ENCODE measurements at regions of chr4 and their contacts with region 1.

Region 1: DNA sequence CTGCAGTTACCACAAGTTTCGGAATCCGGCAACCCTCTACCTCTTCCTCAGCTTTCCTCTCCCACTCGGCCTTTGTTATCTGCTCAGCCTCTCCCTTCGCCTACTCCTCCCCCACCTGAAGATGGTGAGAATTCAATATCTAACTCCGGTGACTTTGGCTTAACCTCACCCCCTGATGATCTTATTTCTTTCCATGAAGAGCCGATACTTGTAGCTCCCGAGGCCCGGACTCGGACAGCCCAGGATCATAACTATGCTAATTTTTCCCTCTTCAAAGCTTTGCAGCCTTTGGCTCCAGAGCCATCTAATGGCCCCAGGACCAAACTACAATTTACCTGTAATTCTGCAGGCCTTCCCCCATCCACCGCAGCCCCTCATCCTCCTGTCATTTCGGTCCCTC is 32.0 kb upstream of the MGST2 start:
- DNase-seq: peak; percentile 26 to 34
- ATAC-seq: peak; percentile 90 to 97 (median 94)
- H3K4me3 ChIP-seq: peak overlapping the region in 9 of 10 donors; percentile 17 to 53 (median 48)
- H3K27ac ChIP-seq: peak overlapping the region in 8 of 10 donors; percentile 10 to 73 (median 44)
- H3K4me1 ChIP-seq: peaks cover 0 to 7% (median 0%) of the 10 kb centered on the region in 9 donors
- H3K27me3 ChIP-seq: no peaks in the 10 kb centered on the region
- CTCF ChIP-seq: peak; percentile 32 to 76 (median 65)

Region 2: GRCh38 chr4:139278485-139278884 is 355.2 kb before region 1 on chr4:
- intact Hi-C with region 1: no loop called
- DNase-seq: no peak
- ATAC-seq: no peak
- H3K4me3 ChIP-seq: peak overlapping the region in 7 of 10 donors; percentile 44 to 62 (median 59)
- H3K27ac ChIP-seq: peak overlapping the region in 1 of 10 donors; percentile 15
- H3K4me1 ChIP-seq: peaks cover 0 to 21% (median 14%) of the 10 kb centered on the region in 9 donors
- H3K27me3 ChIP-seq: peaks cover 0 to 63% (median 25%) of the 10 kb centered on the region in 7 donors
- CTCF ChIP-seq: no peak

Region 3: DNA sequence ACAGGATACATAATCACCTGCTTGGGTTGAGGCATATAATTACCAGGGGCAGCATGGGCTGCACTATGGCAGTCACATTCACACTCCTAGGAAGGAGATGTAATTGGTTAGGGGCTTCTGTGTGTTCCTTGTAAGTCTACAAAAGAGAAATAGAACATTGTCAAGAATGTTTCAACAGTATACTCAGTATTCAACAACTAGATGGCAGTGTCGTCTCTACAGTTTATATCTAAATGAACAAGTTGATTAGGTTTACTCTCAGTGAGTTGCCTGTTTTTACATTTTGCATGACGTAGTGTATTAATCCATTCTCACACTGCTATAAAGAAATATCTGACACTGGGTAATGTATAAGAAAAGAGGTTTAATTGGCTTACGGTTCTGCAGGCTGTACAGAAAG is 230.2 kb before region 1 on chr4:
- intact Hi-C with region 1: loop called in 2 of 10 experiments (anchors 10 kb)
- DNase-seq: no peak
- ATAC-seq: no peak
- H3K4me3 ChIP-seq: no peak overlapping the region
- H3K27ac ChIP-seq: no peak overlapping the region
- H3K4me1 ChIP-seq: peaks cover 0 to 7% (median 0%) of the 10 kb centered on the region in 9 donors
- H3K27me3 ChIP-seq: no peaks in the 10 kb centered on the region
- CTCF ChIP-seq: peak in 3 of 9 donors; percentile 4 to 14 (median 13)

Region 4: GRCh38 chr4:139410312-139410711 is 223.3 kb before region 1 on chr4:
- intact Hi-C with region 1: loop called in 7 of 10 experiments (anchors 5 to 10 kb)
- DNase-seq: no peak
- ATAC-seq: no peak
- H3K4me3 ChIP-seq: no peak overlapping the region
- H3K27ac ChIP-seq: no peak overlapping the region
- H3K4me1 ChIP-seq: no peaks in the 10 kb centered on the region
- H3K27me3 ChIP-seq: no peaks in the 10 kb centered on the region
- CTCF ChIP-seq: no peak

Region 5: GRCh38 chr4:139416073-139416673 is 217.5 kb before region 1 on chr4:
- intact Hi-C with region 1: loop called in 6 of 10 experiments (anchors 2 to 10 kb)
- DNase-seq: no peak
- ATAC-seq: no peak
- H3K4me3 ChIP-seq: no peak overlapping the region
- H3K27ac ChIP-seq: no peak overlapping the region
- H3K4me1 ChIP-seq: peaks cover 0 to 26% (median 13%) of the 10 kb centered on the region in 9 donors
- H3K27me3 ChIP-seq: no peaks in the 10 kb centered on the region
- CTCF ChIP-seq: peak; percentile 51 to 82 (median 71)

Region 6: GRCh38 chr4:139492429-139492828 is 141.2 kb before region 1 on chr4:
- intact Hi-C with region 1: loop called in 6 of 10 experiments (anchors 2 to 10 kb)
- DNase-seq: no peak
- ATAC-seq: no peak
- H3K4me3 ChIP-seq: no peak overlapping the region
- H3K27ac ChIP-seq: no peak overlapping the region
- H3K4me1 ChIP-seq: peaks cover 0 to 5% (median 0%) of the 10 kb centered on the region in 9 donors
- H3K27me3 ChIP-seq: no peaks in the 10 kb centered on the region
- CTCF ChIP-seq: no peak

Region 7: DNA sequence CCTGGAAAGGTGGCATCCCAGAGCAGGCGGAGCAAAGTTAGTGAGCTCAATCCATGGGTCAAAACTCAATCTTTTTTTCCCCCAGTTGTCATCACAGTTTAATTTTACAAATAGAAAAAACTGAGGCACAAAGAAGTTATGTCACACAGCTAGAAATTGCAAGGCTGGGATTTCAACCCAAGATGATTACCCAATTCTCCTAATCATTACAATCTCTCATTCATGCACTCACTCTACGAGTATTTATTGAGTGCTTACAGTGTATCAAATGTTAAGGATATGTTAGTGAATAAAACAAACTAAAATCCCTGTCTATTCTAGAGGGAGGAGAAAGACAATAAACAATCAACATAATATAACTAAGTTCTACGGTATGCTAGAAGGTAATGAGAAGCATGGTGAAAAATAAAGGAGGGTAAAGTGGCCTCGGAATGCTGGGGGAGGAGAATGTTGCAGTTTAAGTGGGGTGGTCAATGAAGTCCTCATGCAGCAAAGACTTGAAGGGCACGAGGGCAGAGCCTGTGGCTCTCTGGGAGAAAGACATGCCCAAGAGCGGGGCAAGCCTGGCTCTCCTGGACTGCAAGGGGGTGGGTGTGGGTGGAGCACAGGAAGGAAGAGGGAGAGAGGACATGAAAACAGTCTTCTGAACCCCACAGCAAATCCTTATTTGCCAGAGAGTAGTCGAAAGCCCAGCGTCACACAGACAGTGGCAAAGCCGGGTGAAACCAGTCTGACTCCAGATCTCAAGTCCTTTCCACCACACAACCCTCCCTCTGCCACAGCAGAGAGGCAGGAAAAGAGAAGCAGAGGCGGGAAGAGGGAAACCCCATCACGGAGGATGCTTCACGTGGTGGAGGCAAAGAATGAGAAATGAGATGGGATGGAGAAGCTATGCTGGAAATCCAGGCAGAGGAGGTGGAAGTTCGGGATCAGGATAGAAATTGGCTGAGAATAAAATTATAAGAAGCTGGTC is 131.4 kb before region 1 on chr4:
- intact Hi-C with region 1: loop called in 7 of 10 experiments (anchors 2 to 10 kb)
- DNase-seq: no peak
- ATAC-seq: no peak
- H3K4me3 ChIP-seq: no peak overlapping the region
- H3K27ac ChIP-seq: no peak overlapping the region
- H3K4me1 ChIP-seq: peaks cover 0 to 20% (median 4%) of the 10 kb centered on the region in 9 donors
- H3K27me3 ChIP-seq: no peaks in the 10 kb centered on the region
- CTCF ChIP-seq: no peak

Region 8: DNA sequence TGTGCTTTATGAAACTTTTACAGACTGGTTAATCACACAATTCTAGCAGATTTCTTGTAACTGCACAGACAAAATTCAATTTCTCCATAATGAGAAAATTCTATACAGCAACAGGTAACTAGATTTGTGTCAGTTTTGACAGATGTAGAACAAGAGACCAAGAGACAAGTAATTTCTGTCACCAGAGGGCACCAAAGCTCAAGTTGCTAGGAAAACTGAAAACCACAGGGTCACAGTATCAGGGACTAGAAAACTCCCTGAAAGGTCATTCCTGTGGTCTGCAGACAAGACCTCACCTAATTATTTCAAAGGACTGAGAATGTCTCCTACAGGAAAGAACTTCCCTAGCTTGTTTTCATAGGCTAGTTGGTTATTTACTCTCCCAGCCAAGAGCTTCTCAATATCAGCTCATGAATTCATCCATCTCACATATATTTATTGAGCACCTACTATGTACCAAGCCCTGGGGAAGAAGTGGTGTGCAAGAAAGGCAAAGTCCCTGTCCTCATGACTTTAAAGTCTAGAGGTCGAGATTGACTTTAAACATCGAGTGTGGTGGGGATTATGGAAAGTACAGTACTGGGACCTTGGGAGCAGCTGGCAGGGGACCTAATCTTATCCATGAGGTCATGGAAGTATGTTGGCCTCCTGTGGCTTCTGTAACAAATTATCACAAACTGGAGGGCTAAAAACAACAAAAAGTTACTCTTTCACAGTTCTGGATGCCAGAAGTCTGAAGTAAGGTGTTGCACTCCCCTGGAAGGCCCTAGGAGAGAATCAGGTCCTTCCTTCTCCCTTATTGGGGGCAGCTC is 29.9 kb before region 1 on chr4:
- intact Hi-C with region 1: loop called in 3 of 10 experiments (anchors 1 to 5 kb)
- DNase-seq: peak in 1 of 2 donors; percentile 56
- ATAC-seq: peak in 6 of 8 donors; percentile 48 to 70 (median 60)
- H3K4me3 ChIP-seq: no peak overlapping the region
- H3K27ac ChIP-seq: no peak overlapping the region
- H3K4me1 ChIP-seq: peaks cover 0 to 19% (median 6%) of the 10 kb centered on the region in 9 donors
- H3K27me3 ChIP-seq: no peaks in the 10 kb centered on the region
- CTCF ChIP-seq: peak; percentile 48 to 84 (median 72)

Region 9: GRCh38 chr4:139858436-139859225 is 225.0 kb after region 1 on chr4:
- intact Hi-C with region 1: no loop called
- DNase-seq: no peak
- ATAC-seq: no peak
- H3K4me3 ChIP-seq: no peak overlapping the region
- H3K27ac ChIP-seq: no peak overlapping the region
- H3K4me1 ChIP-seq: peaks cover 0 to 9% (median 4%) of the 10 kb centered on the region in 9 donors
- H3K27me3 ChIP-seq: no peaks in the 10 kb centered on the region
- CTCF ChIP-seq: no peak

Region 10: DNA sequence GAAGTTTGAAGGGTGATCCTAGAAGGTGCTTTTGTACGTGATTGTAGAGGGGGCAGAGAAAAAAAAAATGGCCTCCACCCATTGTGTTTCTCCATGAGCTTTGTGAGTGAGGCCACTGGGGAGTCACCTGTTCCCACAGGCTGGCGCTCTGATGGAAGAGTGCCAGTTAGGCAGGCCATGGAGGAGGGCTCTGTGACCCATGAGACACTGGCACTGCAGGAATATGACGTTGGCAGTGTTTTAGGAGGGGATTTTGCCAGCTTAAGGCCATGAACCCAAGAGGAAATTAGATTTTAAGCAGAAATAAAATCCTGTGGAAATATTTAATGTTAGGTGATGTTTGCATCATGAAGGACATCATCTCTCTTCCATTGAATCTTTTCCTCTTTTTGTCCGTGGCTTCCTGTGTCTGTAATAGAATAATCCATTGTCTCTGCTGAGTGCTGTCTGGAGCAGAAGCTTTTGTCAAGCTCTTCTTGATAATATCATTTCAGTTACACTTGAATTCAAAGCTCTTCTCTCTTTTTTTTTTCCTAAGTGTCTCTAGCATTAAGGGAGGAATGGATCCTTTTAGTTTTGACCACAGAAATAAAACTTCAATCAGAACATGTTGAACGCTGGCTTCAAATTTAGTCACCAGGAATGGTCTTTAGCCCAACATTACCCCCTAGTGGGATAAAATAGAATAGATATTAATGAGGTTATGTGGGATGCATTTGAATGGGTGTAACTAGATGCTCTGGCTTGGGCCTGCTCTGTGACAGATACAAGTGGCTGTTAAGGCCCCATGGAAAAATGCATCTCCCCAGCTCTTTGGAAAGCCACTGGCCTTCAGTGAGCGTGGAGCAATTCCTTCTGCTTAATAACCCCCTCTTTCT is 976.1 kb after region 1 on chr4:
- intact Hi-C with region 1: no loop called
- DNase-seq: no peak
- ATAC-seq: peak; percentile 74 to 90 (median 86)
- H3K4me3 ChIP-seq: peak overlapping the region in 1 of 10 donors; percentile 4
- H3K27ac ChIP-seq: peak overlapping the region in 8 of 10 donors; percentile 17 to 75 (median 39)
- H3K4me1 ChIP-seq: peaks cover 0 to 14% (median 4%) of the 10 kb centered on the region in 9 donors
- H3K27me3 ChIP-seq: no peaks in the 10 kb centered on the region
- CTCF ChIP-seq: peak; percentile 42 to 74 (median 62)